Uterus (tissue), 4 donors: ENCODE measurements at regions of chr10 and their contacts with region 1.

Region 1: GRCh38 chr10:12350167-12350872 is 973 bp downstream of the CAMK1D start:
- DNase-seq: peak in 1 of 2 donors; percentile 38
- H3K4me3 ChIP-seq: peak overlapping the region; percentile 56 to 95
- H3K27ac ChIP-seq: peak overlapping the region; percentile 87 to 95
- H3K4me1 ChIP-seq: no peaks in the 10 kb centered on the region
- H3K27me3 ChIP-seq: no peaks in the 10 kb centered on the region
- CTCF ChIP-seq: peak in 1 of 4 experiments; percentile 5
- POLR2A ChIP-seq: no peak

Region 2: DNA sequence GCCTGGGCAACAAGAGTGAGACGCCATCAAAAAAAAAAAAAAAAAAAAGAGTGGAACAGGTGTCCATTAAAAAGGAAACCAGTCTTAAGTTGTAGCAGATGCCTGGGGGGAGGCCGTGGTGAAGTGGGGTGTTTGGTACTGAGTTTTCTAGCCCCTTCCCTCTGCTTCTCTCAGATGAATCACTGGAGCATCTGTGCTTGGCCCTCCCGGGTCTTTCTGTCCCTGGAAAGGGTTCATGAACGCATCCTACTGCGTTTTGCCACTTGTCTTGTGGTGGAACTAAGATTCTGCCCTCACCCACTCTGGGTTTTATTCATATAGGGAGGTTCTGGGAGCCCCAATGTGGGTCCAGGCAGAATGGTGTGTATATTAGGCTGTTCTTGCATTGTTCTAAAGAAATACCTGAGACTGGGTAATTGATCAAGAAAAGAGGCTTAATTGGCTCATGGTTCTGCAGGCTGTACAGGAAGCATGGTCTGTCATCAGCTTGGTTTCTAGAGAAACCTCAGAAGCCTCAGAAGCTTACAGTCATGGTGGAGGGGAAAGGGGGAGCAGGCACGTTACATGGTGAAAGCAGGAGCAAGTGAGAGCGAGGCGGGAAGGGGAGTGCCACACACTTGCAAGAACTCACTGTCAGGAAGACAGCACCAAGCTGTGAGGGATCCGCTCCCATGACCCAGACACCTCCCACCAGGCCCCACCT is 62.5 kb after region 1 on chr10:
- intact Hi-C with region 1: loop called (anchors 5 kb)
- DNase-seq: no peak
- H3K4me3 ChIP-seq: no peak overlapping the region
- H3K27ac ChIP-seq: no peak overlapping the region
- H3K4me1 ChIP-seq: peaks cover 0 to 10% of the 10 kb centered on the region in 2 donors
- H3K27me3 ChIP-seq: no peaks in the 10 kb centered on the region
- CTCF ChIP-seq: no peak
- POLR2A ChIP-seq: no peak